ENCODE measurements at regions of chr3 and their contacts with region 1.

Region 1: GRCh38 chr3:51371943-51372557 is 13.0 kb upstream of the MANF start:
- DNase-seq: no peak
- H3K4me3 ChIP-seq: no peak overlapping the region
- H3K27ac ChIP-seq: no peak overlapping the region
- H3K4me1 ChIP-seq: no peaks in the 10 kb centered on the region
- H3K27me3 ChIP-seq: no peaks in the 10 kb centered on the region
- CTCF ChIP-seq: peak; percentile 56 to 70 (median 69)
- EP300 ChIP-seq: no peak
- POLR2A ChIP-seq: no peak

Region 2: GRCh38 chr3:50674349-50675178 is 697.5 kb before region 1 on chr3 and contains the start of gene DOCK3:
- intact Hi-C with region 1: loop called (anchors 10 kb)
- DNase-seq: peak; percentile 68
- H3K4me3 ChIP-seq: peak within 1 kb of the TSS; percentile 63 to 86 (median 68)
- H3K27ac ChIP-seq: peak within 1 kb of the TSS; percentile 62 to 76 (median 66)
- H3K4me1 ChIP-seq: peaks cover 0 to 38% (median 23%) of the 10 kb centered on the region in 4 donors
- H3K27me3 ChIP-seq: peaks cover 0 to 33% (median 1%) of the 10 kb centered on the region in 4 donors
- CTCF ChIP-seq: no peak
- EP300 ChIP-seq: no peak
- POLR2A ChIP-seq: no peak
- total RNA-seq, gene DOCK3: 5.4 to 10.6 (median 7.2) TPM

Region 3: GRCh38 chr3:50971487-50971924 is 400.5 kb before region 1 on chr3:
- intact Hi-C with region 1: loop called (anchors 5 kb)
- DNase-seq: no peak
- H3K4me3 ChIP-seq: no peak overlapping the region
- H3K27ac ChIP-seq: no peak overlapping the region
- H3K4me1 ChIP-seq: peaks cover 0 to 3% (median 0%) of the 10 kb centered on the region in 4 donors
- H3K27me3 ChIP-seq: no peaks in the 10 kb centered on the region
- CTCF ChIP-seq: peak; percentile 67 to 86 (median 73)
- EP300 ChIP-seq: no peak
- POLR2A ChIP-seq: no peak

Region 4: DNA sequence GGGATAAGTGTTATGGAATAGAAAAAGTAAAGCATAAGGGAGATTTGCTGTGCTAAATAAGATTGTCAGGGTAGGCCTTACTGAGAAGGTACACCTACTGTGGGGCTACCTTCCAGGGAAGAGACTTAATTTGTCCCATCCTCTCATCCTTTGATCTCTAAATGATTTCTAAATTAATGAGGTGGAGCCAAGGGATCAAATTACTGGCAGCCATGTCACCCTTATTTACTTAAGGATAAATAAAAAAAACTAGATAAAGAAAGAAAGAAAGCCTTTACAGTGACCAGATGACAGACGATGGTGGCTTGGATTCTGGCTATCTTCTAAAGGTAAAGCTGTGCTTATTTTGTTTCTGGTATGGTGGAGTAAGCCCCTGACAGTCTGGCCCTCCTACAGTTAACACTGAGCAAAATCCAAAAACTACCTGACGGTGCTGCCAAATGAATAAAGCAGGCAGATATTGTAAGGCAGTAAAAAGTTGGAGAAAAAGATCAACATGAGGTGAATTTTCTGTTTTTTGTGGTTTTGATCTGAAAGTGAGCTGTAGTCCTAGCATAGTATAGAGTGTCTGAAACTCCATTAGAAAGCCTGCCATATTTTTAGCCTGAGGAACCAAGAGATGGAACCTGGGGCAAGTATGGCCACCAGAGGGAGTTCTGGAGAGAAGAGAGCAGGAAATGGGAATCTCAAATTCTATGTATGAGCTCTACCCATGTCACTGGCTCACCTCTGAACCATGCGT is 272.1 kb before region 1 on chr3:
- intact Hi-C with region 1: loop called (anchors 10 kb)
- DNase-seq: no peak
- H3K4me3 ChIP-seq: no peak overlapping the region
- H3K27ac ChIP-seq: no peak overlapping the region
- H3K4me1 ChIP-seq: peaks cover 0 to 49% (median 38%) of the 10 kb centered on the region in 4 donors
- H3K27me3 ChIP-seq: no peaks in the 10 kb centered on the region
- CTCF ChIP-seq: peak; percentile 52 to 67 (median 55)
- EP300 ChIP-seq: no peak
- POLR2A ChIP-seq: no peak

Measured in esophagus muscularis mucosa (tissue), 4 donors.